AG04450 (cell line): ENCODE measurements at regions of chr1 and their contacts with region 1.

Region 1: DNA sequence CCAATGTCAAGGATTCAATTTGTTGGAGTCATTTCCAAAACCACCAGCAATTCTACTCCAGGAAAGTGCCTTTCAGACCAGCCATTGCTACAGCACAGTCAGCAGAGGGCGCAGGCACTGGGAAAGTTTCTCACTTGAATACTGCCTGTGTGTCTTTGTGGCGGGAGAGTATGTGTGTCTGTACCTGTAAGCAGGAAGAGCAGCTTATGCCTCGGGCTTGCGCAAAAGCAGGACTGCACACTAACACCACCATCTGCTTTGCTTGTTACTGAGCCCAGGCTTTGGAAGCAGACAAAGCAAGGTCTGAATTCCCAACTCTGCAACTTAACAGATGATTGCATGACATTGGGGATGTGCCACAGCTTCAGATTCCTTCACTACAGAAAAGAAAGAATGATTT is 7.0 kb upstream of the CTSE start:
- DNase-seq: peak; percentile 27
- H3K4me3 ChIP-seq: no peak overlapping the region
- H3K27ac ChIP-seq: no peak overlapping the region
- H3K27me3 ChIP-seq: peaks cover 57% of the 10 kb centered on the region
- CTCF ChIP-seq: peak; percentile 96

Region 2: GRCh38 chr1:205700865-205701401 is 329.8 kb before region 1 on chr1:
- CTCF ChIA-PET with region 1: no interaction called
- POLR2A ChIA-PET with region 1: no interaction called
- DNase-seq: no peak
- H3K4me3 ChIP-seq: no peak overlapping the region
- H3K27ac ChIP-seq: no peak overlapping the region
- H3K27me3 ChIP-seq: no peaks in the 10 kb centered on the region
- CTCF ChIP-seq: no peak

Region 3: DNA sequence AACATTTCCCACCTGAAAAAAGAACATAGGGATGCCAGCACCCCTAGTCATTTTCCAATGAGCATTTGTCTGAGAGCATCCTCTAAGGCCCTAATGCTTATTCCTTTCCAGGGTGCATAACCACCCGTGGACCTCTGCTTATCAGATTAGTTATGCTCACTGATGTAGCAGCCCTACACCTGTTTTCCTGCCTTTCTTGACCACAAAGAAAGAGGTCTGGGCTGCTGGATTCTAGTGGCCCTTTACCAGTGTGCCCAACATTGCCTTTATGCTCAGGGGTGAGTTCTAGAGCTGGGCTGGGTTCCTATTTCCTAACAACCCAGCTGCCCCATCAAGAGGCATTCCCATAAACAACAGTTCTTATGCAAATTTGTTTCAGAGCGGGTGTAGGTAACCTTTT is 160.5 kb before region 1 on chr1:
- CTCF ChIA-PET with region 1: no interaction called
- POLR2A ChIA-PET with region 1: no interaction called
- DNase-seq: no peak
- H3K4me3 ChIP-seq: no peak overlapping the region
- H3K27ac ChIP-seq: no peak overlapping the region
- H3K27me3 ChIP-seq: peaks cover 20% of the 10 kb centered on the region
- CTCF ChIP-seq: no peak

Region 4: GRCh38 chr1:205907794-205908193 is 122.9 kb before region 1 on chr1:
- CTCF ChIA-PET with region 1: no interaction called
- POLR2A ChIA-PET with region 1: no interaction called
- DNase-seq: no peak
- H3K4me3 ChIP-seq: no peak overlapping the region
- H3K27ac ChIP-seq: no peak overlapping the region
- H3K27me3 ChIP-seq: peaks cover 8% of the 10 kb centered on the region
- CTCF ChIP-seq: peak; percentile 67

Region 5: DNA sequence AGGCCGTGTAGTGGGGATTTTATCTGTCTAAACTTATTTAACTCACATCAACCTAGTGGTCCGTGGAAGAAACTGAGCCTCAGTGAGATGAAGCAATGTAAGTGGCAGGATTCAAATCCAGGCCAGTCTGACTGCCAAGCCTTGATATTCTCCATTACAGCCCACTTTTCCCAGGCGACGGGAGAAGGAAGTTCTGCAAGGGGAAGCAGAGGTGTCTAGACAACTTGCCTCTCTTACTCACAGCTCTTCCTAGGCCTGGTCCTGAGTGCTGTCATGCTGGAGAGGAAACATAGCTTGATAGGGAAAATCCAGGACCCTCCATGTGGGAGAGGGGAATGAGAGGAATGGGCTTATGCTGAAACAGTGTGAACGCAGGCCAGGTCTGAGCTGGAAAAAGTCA is 16.1 kb before region 1 on chr1:
- CTCF ChIA-PET with region 1: interaction called, 10 read pairs
- POLR2A ChIA-PET with region 1: no interaction called
- DNase-seq: no peak
- H3K4me3 ChIP-seq: no peak overlapping the region
- H3K27ac ChIP-seq: no peak overlapping the region
- H3K27me3 ChIP-seq: peaks cover 15% of the 10 kb centered on the region
- CTCF ChIP-seq: no peak

Region 6: GRCh38 chr1:206050655-206051235 is 20.0 kb after region 1 on chr1:
- CTCF ChIA-PET with region 1: interaction called, 27 read pairs
- POLR2A ChIA-PET with region 1: no interaction called
- DNase-seq: no peak
- H3K4me3 ChIP-seq: no peak overlapping the region
- H3K27ac ChIP-seq: no peak overlapping the region
- H3K27me3 ChIP-seq: peaks cover 30% of the 10 kb centered on the region
- CTCF ChIP-seq: no peak